Endothelial cell of umbilical vein (primary cell): ENCODE measurements at regions of chr5 and their contacts with region 1.

Region 1: DNA sequence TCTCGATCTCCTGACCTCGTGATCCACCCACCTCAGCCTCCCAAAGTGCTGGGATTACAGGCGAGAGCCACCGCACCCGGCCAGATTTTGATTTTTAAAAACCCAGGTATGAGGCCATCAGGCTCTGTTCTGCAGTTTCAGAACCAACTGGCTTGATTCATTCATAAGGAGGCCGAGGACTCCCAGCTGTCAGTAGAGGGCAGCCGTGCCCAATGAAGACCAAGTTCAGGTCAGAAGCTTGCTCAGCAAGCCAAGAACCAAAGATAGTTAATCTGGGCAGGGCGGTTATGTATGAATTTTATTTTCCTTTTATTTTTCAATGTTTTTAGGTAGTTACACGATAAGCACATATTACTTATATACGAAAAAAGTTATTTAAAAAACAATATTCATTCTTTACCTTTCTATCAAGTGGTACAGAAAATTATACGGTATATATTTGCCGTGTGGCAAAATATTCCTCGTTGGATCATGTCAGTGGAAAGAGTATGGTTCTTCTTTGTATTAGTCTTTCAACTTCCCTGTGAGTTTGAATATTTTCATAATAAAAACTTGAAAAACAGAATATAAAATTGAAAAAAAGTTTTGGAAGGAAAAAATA is 18.0 kb downstream of the MGAT1 start:
- DNase-seq: peak; percentile 80
- H3K4me3 ChIP-seq: no peak overlapping the region
- H3K27ac ChIP-seq: no peak overlapping the region
- H3K4me1 ChIP-seq: peaks cover 34% of the 10 kb centered on the region
- H3K27me3 ChIP-seq: no peaks in the 10 kb centered on the region
- CTCF ChIP-seq: peak; percentile 74 to 75
- POLR2A ChIP-seq: no peak

Region 2: GRCh38 chr5:180699042-180699441 is 85.6 kb before region 1 on chr5:
- CTCF ChIA-PET with region 1: no interaction called
- POLR2A ChIA-PET with region 1: no interaction called
- dilution Hi-C with region 1: no loop called
- intact Hi-C with region 1: no loop called
- DNase-seq: no peak
- H3K4me3 ChIP-seq: no peak overlapping the region
- H3K27ac ChIP-seq: no peak overlapping the region
- H3K4me1 ChIP-seq: no peaks in the 10 kb centered on the region
- H3K27me3 ChIP-seq: no peaks in the 10 kb centered on the region
- CTCF ChIP-seq: no peak
- POLR2A ChIP-seq: no peak

Region 3: DNA sequence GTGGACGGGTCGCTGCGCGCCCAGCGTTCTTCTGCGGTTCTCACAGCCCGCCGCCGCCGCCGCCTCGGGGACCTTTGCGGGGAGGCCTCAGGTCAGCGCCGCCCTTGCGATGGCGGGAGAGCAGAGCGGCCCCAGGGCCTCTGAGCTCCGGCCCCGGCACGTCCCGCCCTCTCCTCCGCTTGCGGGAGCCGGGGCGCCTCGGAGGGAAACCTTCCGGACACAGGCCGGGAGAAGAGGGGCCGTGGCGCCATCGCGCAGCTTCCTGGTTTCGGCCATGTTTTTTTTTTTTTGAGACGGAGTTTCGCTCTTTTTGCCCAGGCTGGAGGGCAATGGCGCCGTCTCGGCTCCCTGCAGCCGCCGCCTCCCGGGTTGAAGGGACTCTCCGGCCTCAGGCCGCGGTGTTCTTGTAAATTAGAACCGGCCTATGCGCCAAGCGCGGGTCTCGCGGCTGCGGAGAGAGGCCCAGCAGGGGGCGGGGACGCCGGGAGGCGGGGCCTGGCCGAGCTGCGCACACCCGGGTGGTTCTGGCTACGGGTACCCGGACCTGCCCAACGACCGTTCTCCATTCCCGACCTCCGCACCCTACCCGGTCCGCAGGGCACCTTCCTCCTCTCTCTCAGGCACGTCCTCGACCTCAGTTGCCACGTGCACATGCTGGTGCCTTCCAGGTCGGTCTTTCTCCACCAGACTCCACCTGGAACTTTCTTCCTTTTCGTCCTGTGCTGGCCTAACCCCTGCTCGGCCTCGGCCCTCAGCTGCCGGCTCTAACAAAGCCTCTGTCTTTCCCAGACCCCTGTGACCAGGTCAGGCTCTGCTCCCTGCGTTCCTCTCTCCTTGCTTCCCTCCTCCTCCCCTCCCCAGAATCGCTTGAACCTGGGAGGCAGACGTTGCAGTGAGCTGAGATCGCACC is 46.8 kb after region 1 on chr5:
- CTCF ChIA-PET with region 1: interaction called, 8 read pairs
- POLR2A ChIA-PET with region 1: no interaction called
- dilution Hi-C with region 1: no loop called
- intact Hi-C with region 1: loop called (anchors 1 kb)
- DNase-seq: peak; percentile 80
- H3K4me3 ChIP-seq: peak overlapping the region; percentile 51 to 63 (median 59)
- H3K27ac ChIP-seq: peak overlapping the region; percentile 69
- H3K4me1 ChIP-seq: peaks cover 10% of the 10 kb centered on the region
- H3K27me3 ChIP-seq: no peaks in the 10 kb centered on the region
- CTCF ChIP-seq: peak in 1 of 2 donors; percentile 32
- POLR2A ChIP-seq: peak; percentile 87

Region 4: DNA sequence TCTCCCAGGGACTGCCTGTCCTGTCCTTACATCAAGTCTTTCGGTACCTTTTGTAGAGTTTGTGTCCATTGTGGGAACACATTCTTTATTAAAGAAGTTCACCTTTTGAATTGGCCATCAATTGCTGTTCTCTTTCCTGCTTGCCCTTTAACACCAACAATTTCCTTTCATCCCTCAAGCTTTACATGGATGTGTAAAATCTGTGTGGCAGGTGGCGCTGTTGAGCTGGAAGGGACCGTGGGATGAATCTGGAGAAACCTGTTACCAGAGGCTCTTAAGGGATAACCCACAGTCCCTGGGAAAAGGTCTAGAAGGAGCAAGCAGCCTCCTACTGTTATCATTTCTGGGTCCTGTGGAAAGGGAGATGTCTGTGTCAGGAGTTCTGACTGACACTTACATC is 84.4 kb after region 1 on chr5:
- CTCF ChIA-PET with region 1: interaction called, 53 read pairs
- POLR2A ChIA-PET with region 1: no interaction called
- dilution Hi-C with region 1: no loop called
- intact Hi-C with region 1: loop called (anchors 1 kb)
- DNase-seq: peak; percentile 79
- H3K4me3 ChIP-seq: no peak overlapping the region
- H3K27ac ChIP-seq: no peak overlapping the region
- H3K4me1 ChIP-seq: peaks cover 4% of the 10 kb centered on the region
- H3K27me3 ChIP-seq: peaks cover 2 to 7% of the 10 kb centered on the region in 2 experiments
- CTCF ChIP-seq: peak; percentile 76 to 79
- POLR2A ChIP-seq: no peak

Region 5: DNA sequence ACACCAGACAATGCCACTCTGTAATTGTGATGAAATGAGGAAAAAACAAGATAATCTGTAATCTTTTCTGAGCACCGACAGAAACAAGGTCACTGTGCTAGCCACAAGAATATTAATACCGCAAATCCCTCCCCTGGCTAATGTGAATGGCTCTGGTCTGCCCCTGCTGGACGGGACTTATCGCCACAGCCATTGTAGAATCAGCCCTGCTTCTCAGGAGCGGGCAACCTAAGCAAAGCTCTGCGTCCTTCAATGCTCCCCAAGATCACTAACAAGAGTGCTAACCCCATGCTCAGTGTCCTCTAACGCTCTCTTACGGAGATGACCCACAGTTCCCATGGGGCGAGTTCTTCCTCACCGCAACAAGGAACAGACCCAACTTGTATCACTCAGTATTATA is 303.7 kb after region 1 on chr5:
- CTCF ChIA-PET with region 1: interaction called, 3 read pairs
- POLR2A ChIA-PET with region 1: no interaction called
- dilution Hi-C with region 1: no loop called
- intact Hi-C with region 1: loop called (anchors 10 kb)
- DNase-seq: no peak
- H3K4me3 ChIP-seq: no peak overlapping the region
- H3K27ac ChIP-seq: no peak overlapping the region
- H3K4me1 ChIP-seq: no peaks in the 10 kb centered on the region
- H3K27me3 ChIP-seq: peaks cover 2% of the 10 kb centered on the region in 2 experiments
- CTCF ChIP-seq: peak; percentile 29 to 36
- POLR2A ChIP-seq: no peak

Region 6: DNA sequence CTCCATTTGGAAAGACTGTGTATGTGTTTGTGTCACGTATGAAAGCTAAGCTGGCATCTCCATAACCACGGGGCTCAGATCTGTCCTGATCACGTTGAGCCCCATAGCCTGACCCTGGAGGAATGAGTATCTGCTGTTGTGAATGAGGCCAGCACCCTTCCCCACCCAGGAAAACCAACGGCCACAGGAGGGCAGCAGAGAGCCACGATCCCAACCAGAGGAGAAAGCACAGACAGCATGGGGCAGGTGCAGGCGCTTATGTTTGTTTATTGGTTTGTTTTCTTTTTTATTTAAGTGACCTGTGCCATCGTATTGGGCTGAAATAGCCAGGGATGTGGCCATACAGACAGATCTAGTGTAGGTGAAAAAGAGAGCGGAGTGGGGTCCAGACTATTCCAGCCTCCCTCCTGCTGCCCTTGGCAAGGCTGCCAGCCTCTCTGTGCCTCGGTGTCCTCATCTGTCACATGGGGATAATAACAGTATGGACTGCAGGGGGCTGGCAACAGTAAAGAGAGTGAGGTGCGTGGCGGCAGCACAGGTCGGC is 374.8 kb after region 1 on chr5:
- CTCF ChIA-PET with region 1: interaction called, 3 read pairs
- POLR2A ChIA-PET with region 1: no interaction called
- dilution Hi-C with region 1: no loop called
- intact Hi-C with region 1: loop called (anchors 1 kb)
- DNase-seq: peak; percentile 53
- H3K4me3 ChIP-seq: no peak overlapping the region
- H3K27ac ChIP-seq: no peak overlapping the region
- H3K4me1 ChIP-seq: peaks cover 10% of the 10 kb centered on the region
- H3K27me3 ChIP-seq: no peaks in the 10 kb centered on the region
- CTCF ChIP-seq: peak; percentile 71 to 74
- POLR2A ChIP-seq: no peak

Region 7: GRCh38 chr5:181173420-181174342 is 389.1 kb after region 1 on chr5:
- CTCF ChIA-PET with region 1: interaction called, 24 read pairs
- POLR2A ChIA-PET with region 1: no interaction called
- dilution Hi-C with region 1: no loop called
- intact Hi-C with region 1: no loop called
- DNase-seq: peak; percentile 43
- H3K4me3 ChIP-seq: peak overlapping the region in 1 of 3 experiments; percentile 14
- H3K27ac ChIP-seq: no peak overlapping the region
- H3K4me1 ChIP-seq: peaks cover 7% of the 10 kb centered on the region
- H3K27me3 ChIP-seq: peaks cover 15 to 19% of the 10 kb centered on the region in 2 experiments
- CTCF ChIP-seq: no peak
- POLR2A ChIP-seq: no peak